K562 (cell line): ENCODE measurements at regions of chr12 and their contacts with region 1.

Region 1: GRCh38 chr12:7219599-7220243 is 30.2 kb downstream of the PEX5 start:
- DNase-seq: peak; percentile 44 to 77 (median 50)
- ATAC-seq: peak; percentile 75
- H3K4me3 ChIP-seq: no peak overlapping the region
- H3K27ac ChIP-seq: no peak overlapping the region
- H3K4me1 ChIP-seq: no peaks in the 10 kb centered on the region
- H3K27me3 ChIP-seq: no peaks in the 10 kb centered on the region
- CTCF ChIP-seq: peak; percentile 77 to 92 (median 91)
- EP300 ChIP-seq: no peak
- POLR2A ChIP-seq: no peak
- RAD21 ChIP-seq: peak; percentile 97 to 99

Region 2: DNA sequence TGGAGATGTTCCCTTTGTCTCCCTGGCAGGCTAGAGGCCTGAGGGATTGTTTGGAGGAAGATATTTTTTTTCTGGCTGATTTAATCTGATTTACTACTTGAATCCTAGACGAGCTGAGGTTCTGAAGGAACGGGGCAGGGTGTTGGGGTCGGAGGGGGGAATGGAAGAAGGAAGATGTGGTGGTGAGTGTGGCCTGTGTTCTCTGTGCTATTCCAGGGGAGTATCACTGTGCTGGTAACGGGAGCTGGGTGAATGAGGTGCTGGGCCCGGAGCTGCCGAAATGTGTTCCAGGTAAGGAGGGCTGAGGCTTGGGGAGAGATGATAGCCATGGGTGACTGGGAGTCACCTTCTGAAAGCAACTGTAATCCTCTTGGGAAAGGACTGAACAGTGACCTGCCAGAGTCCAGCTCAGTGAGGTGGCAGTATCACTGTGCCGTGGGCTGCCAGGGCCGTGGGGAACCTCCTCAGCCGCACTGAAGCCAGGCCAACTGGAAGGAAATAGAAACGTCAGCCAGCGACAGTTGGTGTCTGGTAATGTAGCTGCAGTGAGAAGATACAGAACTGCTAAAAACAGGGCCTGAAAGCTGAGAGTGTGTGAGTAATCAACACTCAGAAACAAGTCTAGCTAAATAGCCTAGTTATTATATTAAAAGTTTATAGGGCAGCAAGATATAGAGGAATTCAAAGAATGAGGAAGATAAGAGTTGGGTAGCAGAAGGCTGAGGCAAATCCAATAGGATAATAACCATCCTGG is 151.3 kb before region 1 on chr12:
- CTCF ChIA-PET with region 1: no interaction called
- POLR2A ChIA-PET with region 1: no interaction called
- in situ Hi-C with region 1: no loop called
- intact Hi-C with region 1: no loop called
- DNase-seq: peak in 1 of 4 experiments; percentile 14
- ATAC-seq: peak; percentile 43; the same call in 2 of the 3 replicates
- H3K4me3 ChIP-seq: no peak overlapping the region
- H3K27ac ChIP-seq: 0 out of 3 replicates have a peak overlapping the region, but pooled peaks have one; percentile 35
- H3K4me1 ChIP-seq: peaks cover 5 to 14% of the 10 kb centered on the region in 2 experiments; a peak in 3 of 5 replicates
- H3K27me3 ChIP-seq: no peaks in the 10 kb centered on the region; a peak in 1 of 5 replicates
- CTCF ChIP-seq: no peak
- EP300 ChIP-seq: no peak
- POLR2A ChIP-seq: no peak
- RAD21 ChIP-seq: no peak

Region 3: GRCh38 chr12:7207866-7208625 is 11.7 kb before region 1 on chr12:
- CTCF ChIA-PET with region 1: no interaction called
- POLR2A ChIA-PET with region 1: no interaction called
- in situ Hi-C with region 1: no loop called
- intact Hi-C with region 1: no loop called
- DNase-seq: no peak
- ATAC-seq: no peak
- H3K4me3 ChIP-seq: no peak overlapping the region
- H3K27ac ChIP-seq: no peak overlapping the region
- H3K4me1 ChIP-seq: no peaks in the 10 kb centered on the region
- H3K27me3 ChIP-seq: no peaks in the 10 kb centered on the region
- CTCF ChIP-seq: no peak
- EP300 ChIP-seq: no peak
- POLR2A ChIP-seq: no peak
- RAD21 ChIP-seq: no peak

Region 4: DNA sequence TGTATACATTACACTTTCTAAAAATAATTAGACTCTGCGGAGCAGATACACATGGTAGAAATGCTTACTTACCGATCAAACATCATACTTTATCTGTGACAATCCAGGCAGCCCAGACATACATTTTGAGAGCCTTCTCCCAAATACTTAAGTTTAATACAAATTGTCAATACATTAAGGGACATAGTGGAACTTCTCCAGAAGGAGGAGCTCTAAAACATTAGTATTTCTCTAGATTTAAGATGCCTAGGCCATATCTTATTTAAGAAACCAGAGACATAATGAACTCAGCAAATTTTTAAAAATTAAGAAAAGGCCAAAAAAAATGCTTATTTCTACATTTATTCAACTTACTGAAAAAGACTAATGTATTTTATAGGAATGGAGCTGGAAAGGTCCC is 100.2 kb after region 1 on chr12:
- CTCF ChIA-PET with region 1: no interaction called
- POLR2A ChIA-PET with region 1: no interaction called
- in situ Hi-C with region 1: no loop called
- intact Hi-C with region 1: loop called (anchors 1 kb)
- DNase-seq: no peak
- ATAC-seq: no peak
- H3K4me3 ChIP-seq: no peak overlapping the region
- H3K27ac ChIP-seq: no peak overlapping the region
- H3K4me1 ChIP-seq: peaks cover 0 to 4% of the 10 kb centered on the region in 2 experiments; a peak in 3 of 5 replicates
- H3K27me3 ChIP-seq: no peaks in the 10 kb centered on the region
- CTCF ChIP-seq: no peak
- EP300 ChIP-seq: no peak
- POLR2A ChIP-seq: no peak
- RAD21 ChIP-seq: peak in 1 of 2 experiments; percentile 26; a peak in 2 of 4 replicates

Region 5: GRCh38 chr12:7387289-7387688 is 167.6 kb after region 1 on chr12:
- CTCF ChIA-PET with region 1: interaction called, 6 read pairs
- POLR2A ChIA-PET with region 1: no interaction called
- in situ Hi-C with region 1: no loop called
- intact Hi-C with region 1: loop called (anchors 5 kb)
- DNase-seq: no peak
- ATAC-seq: no peak
- H3K4me3 ChIP-seq: no peak overlapping the region
- H3K27ac ChIP-seq: no peak overlapping the region
- H3K4me1 ChIP-seq: no peaks in the 10 kb centered on the region
- H3K27me3 ChIP-seq: no peaks in the 10 kb centered on the region
- CTCF ChIP-seq: peak in 2 of 3 experiments; percentile 15 to 28; a peak in 1 of 6 replicates
- EP300 ChIP-seq: no peak
- POLR2A ChIP-seq: no peak
- RAD21 ChIP-seq: peak in 1 of 2 experiments; percentile 40; a peak in 1 of 4 replicates

Region 6: GRCh38 chr12:7460375-7461259 is 240.9 kb after region 1 on chr12:
- CTCF ChIA-PET with region 1: interaction called, 42 read pairs
- POLR2A ChIA-PET with region 1: no interaction called
- in situ Hi-C with region 1: loop called (anchors 5 kb)
- intact Hi-C with region 1: loop called (anchors 1 kb)
- DNase-seq: peak; percentile 48 to 66 (median 53)
- ATAC-seq: peak; percentile 92
- H3K4me3 ChIP-seq: no peak overlapping the region
- H3K27ac ChIP-seq: no peak overlapping the region
- H3K4me1 ChIP-seq: no peaks in the 10 kb centered on the region
- H3K27me3 ChIP-seq: no peaks in the 10 kb centered on the region; a peak in 1 of 5 replicates
- CTCF ChIP-seq: peak; percentile 72 to 91 (median 73); a peak in 5 of 6 replicates
- EP300 ChIP-seq: no peak
- POLR2A ChIP-seq: no peak
- RAD21 ChIP-seq: peak; percentile 90 to 96